AG04449 (cell line): ENCODE measurements at regions of chr14 and their contacts with region 1.

Region 1: DNA sequence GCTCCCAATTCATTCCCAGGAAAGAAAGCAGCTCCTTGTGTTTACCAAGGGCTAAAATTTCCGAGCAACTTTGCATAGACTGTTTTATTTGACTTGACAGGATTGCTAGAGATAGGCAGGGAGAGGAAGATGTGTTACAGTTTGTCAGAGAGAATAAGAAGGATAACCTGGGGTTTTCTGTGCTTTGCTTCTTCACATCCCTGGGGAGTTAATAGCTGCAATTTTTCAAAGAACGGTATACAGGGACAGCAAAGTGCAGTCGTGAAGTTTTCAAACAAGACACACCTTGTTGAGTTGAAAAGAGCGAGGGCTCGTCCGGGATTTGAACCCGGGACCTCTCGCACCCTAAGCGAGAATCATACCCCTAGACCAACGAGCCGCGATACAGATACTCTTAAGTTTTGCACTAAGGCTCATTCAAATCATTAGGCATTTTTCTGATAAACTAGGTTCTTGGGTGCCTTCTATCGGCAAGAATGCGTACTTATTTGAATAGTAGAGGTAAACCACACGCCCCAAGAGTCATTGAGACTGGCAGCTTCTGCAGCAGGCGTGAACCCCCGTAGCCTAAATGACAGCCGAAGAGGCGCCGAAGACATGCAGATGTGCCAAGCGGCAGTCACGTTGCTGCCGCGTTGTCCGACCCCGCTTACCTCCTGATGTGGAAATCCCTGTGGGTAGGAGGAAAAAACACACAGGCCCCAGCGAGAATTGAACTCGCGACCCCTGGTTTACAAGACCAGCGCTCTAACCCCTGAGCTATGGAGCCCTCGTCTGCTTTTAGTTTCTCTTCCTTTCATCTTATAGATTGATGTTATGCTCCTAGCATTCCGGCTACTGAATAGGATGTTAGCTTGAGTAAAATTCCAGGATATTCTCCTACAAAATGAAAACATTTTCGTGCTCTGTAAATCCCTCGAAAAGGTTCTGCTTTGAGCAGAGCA is 22.2 kb upstream of the RNASE12 start:
- DNase-seq: peak; percentile 98
- H3K4me3 ChIP-seq: peak overlapping the region; percentile 70
- CTCF ChIP-seq: peak; percentile 68

Region 2: GRCh38 chr14:20332788-20333493 is 280.4 kb before region 1 on chr14 and contains the start of gene CCNB1IP1:
- CTCF ChIA-PET with region 1: interaction called, 161 read pairs
- POLR2A ChIA-PET with region 1: no interaction called
- DNase-seq: peak; percentile 67
- H3K4me3 ChIP-seq: peak within 1 kb of the TSS; percentile 76
- CTCF ChIP-seq: no peak

Region 3: GRCh38 chr14:20413045-20413799 is 200.1 kb before region 1 on chr14 and contains the start of gene TEP1:
- CTCF ChIA-PET with region 1: interaction called, 119 read pairs
- POLR2A ChIA-PET with region 1: interaction called, 3 read pairs
- DNase-seq: no peak
- H3K4me3 ChIP-seq: peak within 1 kb of the TSS; percentile 98
- CTCF ChIP-seq: no peak

Region 4: GRCh38 chr14:20530771-20531571 is 82.4 kb before region 1 on chr14:
- CTCF ChIA-PET with region 1: interaction called, 16 read pairs
- POLR2A ChIA-PET with region 1: no interaction called
- DNase-seq: no peak
- H3K4me3 ChIP-seq: no peak overlapping the region
- CTCF ChIP-seq: peak; percentile 77

Region 5: GRCh38 chr14:20624495-20625070 is 11.2 kb after region 1 on chr14:
- CTCF ChIA-PET with region 1: interaction called, 15 read pairs
- POLR2A ChIA-PET with region 1: interaction called, 3 read pairs
- DNase-seq: no peak
- H3K4me3 ChIP-seq: peak overlapping the region; percentile 61
- CTCF ChIP-seq: no peak

Region 6: GRCh38 chr14:20682435-20683124 is 69.2 kb after region 1 on chr14:
- CTCF ChIA-PET with region 1: interaction called, 50 read pairs
- POLR2A ChIA-PET with region 1: interaction called, 17 read pairs
- DNase-seq: no peak
- H3K4me3 ChIP-seq: peak overlapping the region; percentile 96
- CTCF ChIP-seq: no peak

Region 7: GRCh38 chr14:20697273-20698017 is 84.1 kb after region 1 on chr14:
- CTCF ChIA-PET with region 1: interaction called, 41 read pairs
- POLR2A ChIA-PET with region 1: no interaction called
- DNase-seq: no peak
- H3K4me3 ChIP-seq: no peak overlapping the region
- CTCF ChIP-seq: peak; percentile 81